ENCODE measurements at regions of chr11 and their contacts with region 1.

Region 1: DNA sequence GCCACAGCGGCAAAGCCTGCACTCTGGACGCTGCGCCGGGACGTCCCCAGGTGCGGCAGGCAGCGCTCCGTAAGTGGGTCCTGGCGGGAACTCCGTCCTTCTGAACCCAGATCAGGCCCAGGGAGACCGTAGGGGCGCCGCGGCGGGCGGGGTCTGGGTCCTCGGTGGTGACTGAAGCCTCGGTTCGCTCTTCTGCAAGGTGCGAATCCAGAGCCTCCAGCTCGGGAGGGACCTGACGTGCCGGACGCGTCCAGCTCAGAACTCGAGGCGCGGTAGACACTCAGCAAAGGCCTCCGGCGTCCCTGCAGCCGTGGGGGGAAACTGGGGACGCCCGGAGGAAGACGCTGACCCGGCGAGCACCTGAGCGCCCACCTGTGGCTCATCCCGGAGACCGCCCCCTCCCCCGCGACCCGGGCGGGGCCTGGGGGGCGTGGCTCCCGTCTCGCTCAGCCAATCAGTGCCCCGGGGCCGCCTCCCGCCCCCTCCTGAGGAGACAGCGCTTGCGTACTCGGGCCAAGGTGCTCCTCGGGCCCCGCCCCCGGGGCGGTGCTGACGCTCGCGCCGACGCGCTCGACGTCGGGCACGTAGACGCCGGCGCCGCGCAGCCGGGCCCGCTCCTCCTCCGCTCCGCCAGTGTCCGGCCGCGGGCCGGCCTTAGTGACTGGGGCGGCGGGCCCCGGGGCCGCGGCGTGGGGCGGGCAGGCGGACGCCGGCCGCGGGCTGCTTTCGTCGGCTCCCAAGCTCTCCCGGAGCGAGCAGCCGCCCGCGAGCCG is at the start of gene PPFIA1:
- DNase-seq: peak; percentile 94 to 98
- ATAC-seq: peak; percentile 93 to 98 (median 94)
- H3K4me3 ChIP-seq: peak within 1 kb of the TSS; percentile 65
- H3K4me3 Mint-ChIP-seq: peak within 1 kb of the TSS; percentile 95
- H3K27ac ChIP-seq: no peak within 1 kb of the TSS
- H3K27ac Mint-ChIP-seq: peak within 1 kb of the TSS; percentile 81 to 85
- H3K4me1 ChIP-seq: peaks cover 15% of the 10 kb centered on the region
- H3K4me1 Mint-ChIP-seq: peaks cover 28 to 29% of the 10 kb centered on the region in 2 donors
- H3K27me3 ChIP-seq: peaks cover 5% of the 10 kb centered on the region
- H3K27me3 Mint-ChIP-seq: peaks cover 7 to 9% of the 10 kb centered on the region in 2 donors
- CTCF ChIP-seq: no peak
- total RNA-seq, gene PPFIA1: 42.1 to 75.4 (median 51.7) TPM

Region 2: DNA sequence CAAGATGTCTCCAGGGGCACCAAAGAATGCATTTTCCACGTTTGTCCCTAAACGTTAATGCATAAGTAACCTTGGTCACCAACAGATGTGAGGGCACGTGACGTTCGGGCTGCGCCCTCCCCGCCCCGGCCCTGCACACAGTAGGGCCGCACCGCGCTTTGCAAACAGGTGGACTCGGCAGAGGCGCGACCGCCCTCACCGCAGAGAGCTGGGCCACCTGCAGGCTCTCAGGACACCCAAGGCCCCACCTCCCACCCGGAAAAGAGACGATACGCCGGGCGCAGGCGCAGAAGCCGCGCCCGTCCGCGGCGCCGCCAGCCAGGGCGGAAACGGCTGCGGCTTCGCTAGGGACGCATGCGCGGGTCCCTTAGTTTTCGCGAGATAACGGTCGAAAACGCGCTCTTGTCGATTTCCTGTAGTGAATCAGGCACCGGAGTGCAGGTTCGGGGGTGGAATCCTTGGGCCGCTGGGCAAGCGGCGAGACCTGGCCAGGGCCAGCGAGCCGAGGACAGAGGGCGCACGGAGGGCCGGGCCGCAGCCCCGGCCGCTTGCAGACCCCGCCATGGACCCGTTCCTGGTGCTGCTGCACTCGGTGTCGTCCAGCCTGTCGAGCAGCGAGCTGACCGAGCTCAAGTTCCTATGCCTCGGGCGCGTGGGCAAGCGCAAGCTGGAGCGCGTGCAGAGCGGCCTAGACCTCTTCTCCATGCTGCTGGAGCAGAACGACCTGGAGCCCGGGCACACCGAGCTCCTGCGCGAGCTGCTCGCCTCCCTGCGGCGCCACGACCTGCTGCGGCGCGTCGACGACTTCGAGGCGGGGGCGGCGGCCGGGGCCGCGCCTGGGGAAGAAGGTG is 67.2 kb before region 1 on chr11 and contains the start of gene FADD:
- intact Hi-C with region 1: loop called (anchors 1 kb)
- DNase-seq: peak; percentile 86 to 98
- ATAC-seq: peak; percentile 67 to 77 (median 73)
- H3K4me3 ChIP-seq: peak within 1 kb of the TSS; percentile 77
- H3K4me3 Mint-ChIP-seq: peak within 1 kb of the TSS; percentile 96
- H3K27ac ChIP-seq: peak within 1 kb of the TSS; percentile 88
- H3K27ac Mint-ChIP-seq: peak within 1 kb of the TSS; percentile 92 to 95
- H3K4me1 ChIP-seq: peaks cover 38% of the 10 kb centered on the region
- H3K4me1 Mint-ChIP-seq: peaks cover 26 to 46% of the 10 kb centered on the region in 2 donors
- H3K27me3 ChIP-seq: no peaks in the 10 kb centered on the region
- H3K27me3 Mint-ChIP-seq: peaks cover 0 to 5% of the 10 kb centered on the region in 2 donors
- CTCF ChIP-seq: no peak
- total RNA-seq, gene FADD: 7.8 to 9.2 (median 9.0) TPM